Ovary (tissue), 10 donors: ENCODE measurements at regions of chr2 and their contacts with region 1.

Region 1: GRCh38 chr2:54634564-54635511 is 88.6 kb upstream of the EML6 start:
- DNase-seq: peak in 4 of 5 donors; percentile 29 to 52 (median 34)
- H3K4me3 ChIP-seq: no peak overlapping the region
- H3K27ac ChIP-seq: peak overlapping the region; percentile 36 to 58
- H3K4me1 ChIP-seq: peaks cover 17% of the 10 kb centered on the region
- H3K27me3 ChIP-seq: no peaks in the 10 kb centered on the region
- CTCF ChIP-seq: no peak
- EP300 ChIP-seq: no peak
- POLR2A ChIP-seq: no peak

Region 2: DNA sequence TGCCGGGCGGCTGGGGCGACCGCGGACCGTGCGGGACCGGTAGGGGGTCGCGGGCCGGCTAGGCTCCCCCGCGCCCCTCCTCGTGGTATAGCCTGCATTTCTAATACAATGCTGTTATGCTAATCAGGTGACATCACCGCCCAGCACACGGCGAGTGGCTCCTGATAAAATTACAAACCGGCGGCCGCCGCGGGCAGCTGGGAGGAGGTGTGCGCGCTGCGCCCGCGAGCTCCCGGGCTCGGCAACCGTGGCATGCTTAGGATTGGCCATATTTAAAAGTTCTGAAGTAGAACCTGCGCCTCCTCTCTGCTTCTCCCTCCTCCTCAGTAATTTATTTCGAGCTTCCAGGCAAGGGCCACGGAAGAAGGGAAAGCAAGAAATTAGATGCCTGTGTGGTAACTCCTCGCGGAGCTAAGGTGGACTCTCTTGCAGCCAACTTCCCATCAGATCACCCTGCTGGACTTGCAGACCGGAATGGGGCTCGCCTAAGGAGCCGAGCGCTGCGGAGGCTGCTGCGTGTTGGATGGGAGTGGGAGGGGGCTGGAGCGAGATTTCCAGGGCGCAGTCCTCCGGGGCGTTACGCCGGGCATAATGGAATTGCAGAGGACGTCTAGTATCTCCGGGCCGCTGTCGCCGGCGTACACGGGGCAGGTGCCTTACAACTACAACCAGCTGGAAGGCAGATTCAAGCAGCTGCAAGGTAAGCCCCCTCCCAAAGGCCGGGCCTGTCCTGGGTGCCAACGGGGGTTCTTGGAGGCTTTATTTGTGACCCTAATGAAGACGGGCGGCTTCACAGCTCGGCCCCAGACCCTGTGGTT is 76.4 kb before region 1 on chr2:
- intact Hi-C with region 1: loop called in 1 of 4 experiments (anchors 5 kb)
- DNase-seq: peak; percentile 23 to 55 (median 41)
- H3K4me3 ChIP-seq: peak overlapping the region; percentile 50
- H3K27ac ChIP-seq: peak overlapping the region; percentile 44 to 62
- H3K4me1 ChIP-seq: peaks cover 17% of the 10 kb centered on the region
- H3K27me3 ChIP-seq: no peaks in the 10 kb centered on the region
- CTCF ChIP-seq: no peak
- EP300 ChIP-seq: no peak
- POLR2A ChIP-seq: no peak